Activated naive CD4-positive, alpha-beta T cell treated with anti-CD3 and anti-CD28 coated beads for 36 hours (primary cell): ENCODE measurements at regions of chr13 and their contacts with region 1.

Region 1: GRCh38 chr13:42969558-42970172 is 22.4 kb downstream of the EPSTI1 start:
- DNase-seq: peak; percentile 88
- H3K4me3 Mint-ChIP-seq: no peak overlapping the region
- H3K27ac Mint-ChIP-seq: no peak overlapping the region
- H3K4me1 Mint-ChIP-seq: peaks cover 8% of the 10 kb centered on the region
- H3K27me3 Mint-ChIP-seq: no peaks in the 10 kb centered on the region

Region 2: DNA sequence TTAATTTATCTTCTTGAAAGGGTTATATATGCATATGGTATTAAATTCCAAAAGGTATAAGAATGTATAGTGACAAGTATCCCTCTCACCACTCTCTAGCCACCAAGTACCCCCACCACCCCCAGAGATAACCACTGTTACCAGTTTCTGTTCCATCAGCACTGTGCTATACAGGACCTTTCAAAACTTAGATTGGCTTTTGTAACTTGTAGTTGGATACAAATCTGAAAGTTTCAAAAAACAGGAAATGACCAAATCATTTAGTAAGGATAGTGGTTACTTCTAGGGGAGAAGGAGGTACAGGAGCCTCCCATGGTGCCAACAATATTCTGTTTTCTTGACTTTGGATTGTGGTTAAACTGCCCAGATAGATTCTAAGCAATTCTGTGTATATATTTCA is 641.0 kb before region 1 on chr13:
- CTCF ChIA-PET with region 1: no interaction called
- intact Hi-C with region 1: loop called (anchors 10 kb)
- DNase-seq: no peak
- H3K4me3 Mint-ChIP-seq: no peak overlapping the region
- H3K27ac Mint-ChIP-seq: peak overlapping the region; percentile 10
- H3K4me1 Mint-ChIP-seq: peaks cover 21% of the 10 kb centered on the region
- H3K27me3 Mint-ChIP-seq: no peaks in the 10 kb centered on the region

Region 3: DNA sequence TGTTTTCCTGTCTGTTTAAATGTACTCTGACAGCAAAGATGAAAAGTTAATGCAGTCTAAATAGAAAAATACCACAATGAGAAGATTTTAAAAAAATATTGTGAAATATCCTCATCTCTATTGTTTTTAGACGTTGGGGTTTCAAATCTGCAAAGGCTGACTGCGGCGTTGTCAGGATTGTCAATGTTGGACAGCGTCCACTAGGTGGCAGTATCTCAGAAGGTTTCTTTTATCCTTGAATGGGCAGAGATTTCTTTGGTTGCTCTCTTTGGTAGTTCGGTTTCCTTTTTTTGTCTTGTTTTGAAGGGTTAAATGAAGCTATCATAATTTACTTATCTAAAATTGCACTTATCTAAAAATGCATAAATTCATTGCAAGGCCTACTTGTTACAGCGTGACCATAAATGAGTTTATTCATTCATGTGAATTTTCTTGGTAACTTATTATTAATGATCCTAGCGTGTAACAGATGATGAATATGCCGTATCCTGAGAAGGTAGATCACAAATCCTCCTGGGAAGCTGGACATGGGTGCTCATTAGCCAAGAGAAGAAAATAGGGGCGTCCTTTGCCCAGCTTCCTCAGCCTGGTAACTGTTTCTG is 374.6 kb before region 1 on chr13:
- CTCF ChIA-PET with region 1: interaction called, 4 read pairs
- intact Hi-C with region 1: loop called (anchors 1 kb)
- DNase-seq: peak; percentile 73
- H3K4me3 Mint-ChIP-seq: no peak overlapping the region
- H3K27ac Mint-ChIP-seq: no peak overlapping the region
- H3K4me1 Mint-ChIP-seq: no peaks in the 10 kb centered on the region
- H3K27me3 Mint-ChIP-seq: no peaks in the 10 kb centered on the region

Region 4: GRCh38 chr13:43023289-43023951 is 53.8 kb after region 1 on chr13 and contains the start of gene DNAJC15:
- CTCF ChIA-PET with region 1: interaction called, 5 read pairs
- intact Hi-C with region 1: loop called (anchors 1 kb)
- DNase-seq: peak; percentile 88
- H3K4me3 Mint-ChIP-seq: peak within 1 kb of the TSS; percentile 98
- H3K27ac Mint-ChIP-seq: peak within 1 kb of the TSS; percentile 94
- H3K4me1 Mint-ChIP-seq: peaks cover 30% of the 10 kb centered on the region
- H3K27me3 Mint-ChIP-seq: no peaks in the 10 kb centered on the region
- total RNA-seq, gene DNAJC15: 14.5 to 16.8 TPM

Region 5: GRCh38 chr13:43119206-43119605 is 149.5 kb after region 1 on chr13:
- CTCF ChIA-PET with region 1: no interaction called
- intact Hi-C with region 1: no loop called
- DNase-seq: no peak
- H3K4me3 Mint-ChIP-seq: no peak overlapping the region
- H3K27ac Mint-ChIP-seq: no peak overlapping the region
- H3K4me1 Mint-ChIP-seq: no peaks in the 10 kb centered on the region
- H3K27me3 Mint-ChIP-seq: no peaks in the 10 kb centered on the region

Region 6: GRCh38 chr13:43132257-43132656 is 162.6 kb after region 1 on chr13:
- CTCF ChIA-PET with region 1: interaction called, 7 read pairs
- intact Hi-C with region 1: loop called (anchors 1 kb)
- DNase-seq: peak; percentile 29
- H3K4me3 Mint-ChIP-seq: no peak overlapping the region
- H3K27ac Mint-ChIP-seq: no peak overlapping the region
- H3K4me1 Mint-ChIP-seq: peaks cover 12% of the 10 kb centered on the region
- H3K27me3 Mint-ChIP-seq: no peaks in the 10 kb centered on the region